CD4-positive, alpha-beta T cell (primary cell): ENCODE measurements at regions of chr6 and their contacts with region 1.

Region 1: GRCh38 chr6:109411034-109411433 is 28.8 kb upstream of the CD164 start:
- DNase-seq: no peak
- ATAC-seq: no peak
- H3K4me3 ChIP-seq: no peak overlapping the region
- H3K4me3 Mint-ChIP-seq: no peak overlapping the region
- H3K27ac ChIP-seq: no peak overlapping the region
- H3K27ac Mint-ChIP-seq: no peak overlapping the region
- H3K4me1 ChIP-seq: no peaks in the 10 kb centered on the region
- H3K4me1 Mint-ChIP-seq: no peaks in the 10 kb centered on the region
- H3K27me3 ChIP-seq: no peaks in the 10 kb centered on the region
- H3K27me3 Mint-ChIP-seq: no peaks in the 10 kb centered on the region
- CTCF ChIP-seq: no peak

Region 2: DNA sequence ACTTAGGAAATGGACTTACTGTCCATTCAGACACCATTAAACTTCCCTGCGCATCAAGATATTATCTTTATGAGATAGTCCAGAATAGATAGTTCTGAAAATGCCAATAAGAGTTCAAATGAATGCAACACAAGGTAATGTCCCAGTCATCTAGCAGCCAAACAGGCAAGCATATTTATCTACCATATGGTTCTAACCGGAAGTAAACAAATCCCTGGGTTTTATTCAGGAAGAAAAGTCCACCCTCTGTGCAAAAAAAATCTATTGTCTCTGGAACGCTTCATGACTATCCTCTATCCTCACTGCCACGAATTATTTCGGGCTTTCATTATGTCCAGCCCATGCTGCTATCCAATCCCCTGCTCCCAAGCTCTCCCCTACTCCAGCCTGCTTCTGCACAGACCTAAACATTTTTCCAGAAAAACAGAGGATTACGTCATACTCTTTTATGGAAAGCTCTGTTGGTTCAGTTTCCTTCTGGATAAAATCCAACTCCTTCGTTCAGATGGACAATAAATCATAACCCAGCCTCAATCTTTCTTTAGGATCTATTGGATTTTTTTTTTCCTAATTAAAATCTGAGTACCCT is 17.9 kb after region 1 on chr6:
- CTCF ChIA-PET with region 1: no interaction called
- POLR2A ChIA-PET with region 1: no interaction called
- intact Hi-C with region 1: loop called in 1 of 2 experiments (anchors 2 kb)
- DNase-seq: no peak
- ATAC-seq: no peak
- H3K4me3 ChIP-seq: no peak overlapping the region
- H3K4me3 Mint-ChIP-seq: no peak overlapping the region
- H3K27ac ChIP-seq: no peak overlapping the region
- H3K27ac Mint-ChIP-seq: no peak overlapping the region
- H3K4me1 ChIP-seq: no peaks in the 10 kb centered on the region
- H3K4me1 Mint-ChIP-seq: no peaks in the 10 kb centered on the region
- H3K27me3 ChIP-seq: no peaks in the 10 kb centered on the region
- H3K27me3 Mint-ChIP-seq: no peaks in the 10 kb centered on the region
- CTCF ChIP-seq: no peak

Region 3: DNA sequence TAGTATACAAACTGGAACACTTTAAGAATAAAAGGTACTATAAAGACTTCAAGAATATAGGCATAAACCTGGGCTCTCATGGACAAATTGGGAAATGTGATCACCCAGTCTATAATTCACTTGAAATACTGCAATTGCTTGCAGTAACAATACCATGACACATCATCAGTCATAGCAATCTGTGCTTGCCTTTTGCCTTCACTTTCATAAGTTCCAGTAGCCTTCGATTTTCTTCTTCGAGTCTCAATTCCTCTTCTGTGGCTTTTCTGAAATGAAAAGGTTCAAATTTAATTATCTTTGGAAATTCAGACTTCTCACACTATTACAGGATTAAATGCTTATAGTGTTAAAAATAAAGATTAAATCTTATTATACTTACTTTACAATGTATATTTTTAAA is 168.3 kb after region 1 on chr6:
- CTCF ChIA-PET with region 1: no interaction called
- POLR2A ChIA-PET with region 1: no interaction called
- intact Hi-C with region 1: no loop called
- DNase-seq: no peak
- ATAC-seq: no peak
- H3K4me3 ChIP-seq: no peak overlapping the region
- H3K4me3 Mint-ChIP-seq: no peak overlapping the region
- H3K27ac ChIP-seq: no peak overlapping the region
- H3K27ac Mint-ChIP-seq: no peak overlapping the region
- H3K4me1 ChIP-seq: no peaks in the 10 kb centered on the region
- H3K4me1 Mint-ChIP-seq: no peaks in the 10 kb centered on the region
- H3K27me3 ChIP-seq: no peaks in the 10 kb centered on the region
- H3K27me3 Mint-ChIP-seq: no peaks in the 10 kb centered on the region
- CTCF ChIP-seq: no peak

Region 4: GRCh38 chr6:109853426-109853825 is 442.4 kb after region 1 on chr6:
- CTCF ChIA-PET with region 1: no interaction called
- POLR2A ChIA-PET with region 1: no interaction called
- intact Hi-C with region 1: no loop called
- DNase-seq: no peak
- ATAC-seq: no peak
- H3K4me3 ChIP-seq: no peak overlapping the region
- H3K4me3 Mint-ChIP-seq: no peak overlapping the region
- H3K27ac ChIP-seq: no peak overlapping the region
- H3K27ac Mint-ChIP-seq: no peak overlapping the region
- H3K4me1 ChIP-seq: no peaks in the 10 kb centered on the region
- H3K4me1 Mint-ChIP-seq: no peaks in the 10 kb centered on the region
- H3K27me3 ChIP-seq: no peaks in the 10 kb centered on the region
- H3K27me3 Mint-ChIP-seq: no peaks in the 10 kb centered on the region
- CTCF ChIP-seq: no peak